ENCODE measurements at regions of chr2 and their contacts with region 1.

Region 1: DNA sequence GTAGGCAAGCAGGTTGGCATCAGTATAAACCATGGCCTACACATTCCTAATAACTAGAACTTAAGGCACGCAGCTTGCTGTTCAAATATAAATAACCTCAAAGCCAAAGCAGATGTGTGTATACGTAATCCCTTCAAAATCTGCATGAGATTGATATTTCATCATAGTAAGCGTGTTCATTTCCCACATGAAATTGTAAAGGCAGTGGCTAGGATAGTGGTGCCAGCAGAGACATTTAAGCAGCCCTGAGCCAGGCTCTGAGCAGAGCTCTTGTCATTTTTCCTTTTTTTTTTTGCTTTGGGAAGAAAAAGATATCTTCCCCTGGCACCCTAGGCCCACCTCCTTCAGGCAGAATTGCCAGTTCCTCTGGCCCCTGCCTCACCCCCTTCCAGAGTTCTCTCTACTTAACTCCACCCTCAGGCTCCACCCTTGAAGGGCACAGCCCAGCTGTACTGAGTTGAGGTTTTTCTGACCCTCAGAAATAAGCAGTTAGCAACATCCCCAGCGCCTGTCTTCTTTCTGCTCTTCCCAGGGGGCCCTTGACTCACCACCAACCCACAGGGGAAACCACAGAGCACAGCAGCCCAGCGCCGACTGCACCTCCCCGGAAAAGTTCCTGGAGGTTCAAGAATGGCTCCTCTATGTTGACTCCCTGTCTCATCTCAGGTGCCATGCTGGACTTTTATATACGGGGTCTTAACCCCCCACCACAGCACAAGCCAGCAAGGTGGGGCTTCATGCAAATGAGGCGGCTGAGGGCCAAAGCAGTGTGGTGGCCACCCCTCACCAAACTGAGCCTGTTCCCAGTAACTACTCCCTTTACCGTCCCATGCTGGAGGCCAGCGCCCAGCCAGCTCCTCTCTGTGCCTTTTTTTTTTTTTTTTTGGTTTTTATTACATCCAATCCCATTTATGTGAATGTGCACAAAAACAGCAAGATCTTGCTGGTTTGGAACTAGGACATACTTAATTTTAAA is 84.7 kb downstream of the EHD3 start:
- DNase-seq: peak; percentile 86
- ATAC-seq: peak; percentile 69
- H3K4me3 ChIP-seq: no peak overlapping the region
- H3K27ac ChIP-seq: peak overlapping the region; percentile 90
- H3K4me1 ChIP-seq: peaks cover 19% of the 10 kb centered on the region
- H3K27me3 ChIP-seq: no peaks in the 10 kb centered on the region
- CTCF ChIP-seq: no peak
- POLR2A ChIP-seq: no peak
- RAD21 ChIP-seq: no peak

Region 2: GRCh38 chr2:30346471-30347169 is 972.0 kb before region 1 on chr2:
- CTCF ChIA-PET with region 1: no interaction called
- POLR2A ChIA-PET with region 1: no interaction called
- dilution Hi-C with region 1: no loop called
- in situ Hi-C with region 1: no loop called
- intact Hi-C with region 1: no loop called
- DNase-seq: no peak
- ATAC-seq: peak; percentile 56; the same call in 1 of the 2 replicates
- H3K4me3 ChIP-seq: no peak overlapping the region
- H3K27ac ChIP-seq: no peak overlapping the region
- H3K4me1 ChIP-seq: no peaks in the 10 kb centered on the region; the same call in 1 of the 2 replicates
- H3K27me3 ChIP-seq: no peaks in the 10 kb centered on the region
- CTCF ChIP-seq: no peak
- POLR2A ChIP-seq: no peak
- RAD21 ChIP-seq: no peak

Region 3: DNA sequence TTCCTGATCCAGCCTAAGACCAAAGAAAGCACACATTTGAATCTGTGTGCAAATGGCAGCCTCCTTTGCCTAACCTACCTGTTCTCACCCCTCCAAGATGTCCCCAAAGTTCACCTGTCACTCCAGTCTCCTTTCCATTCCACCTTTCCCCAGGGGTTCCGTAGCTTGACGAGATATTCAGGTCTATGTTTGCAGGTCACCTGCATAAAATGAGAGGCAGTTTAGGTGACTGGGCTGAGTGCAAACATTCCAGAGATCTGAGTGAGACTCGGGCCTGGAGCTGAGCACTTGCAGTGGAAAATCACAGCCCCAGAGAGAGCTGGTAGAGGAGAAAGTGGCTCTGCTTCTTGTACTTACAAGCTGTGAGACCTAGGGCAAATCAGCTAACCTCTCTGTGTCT is 121.5 kb before region 1 on chr2:
- CTCF ChIA-PET with region 1: no interaction called
- POLR2A ChIA-PET with region 1: no interaction called
- dilution Hi-C with region 1: no loop called
- in situ Hi-C with region 1: no loop called
- intact Hi-C with region 1: no loop called
- DNase-seq: no peak
- ATAC-seq: no peak
- H3K4me3 ChIP-seq: no peak overlapping the region
- H3K27ac ChIP-seq: no peak overlapping the region
- H3K4me1 ChIP-seq: no peaks in the 10 kb centered on the region
- H3K27me3 ChIP-seq: peaks cover 13% of the 10 kb centered on the region
- CTCF ChIP-seq: no peak
- POLR2A ChIP-seq: no peak
- RAD21 ChIP-seq: no peak

Region 4: DNA sequence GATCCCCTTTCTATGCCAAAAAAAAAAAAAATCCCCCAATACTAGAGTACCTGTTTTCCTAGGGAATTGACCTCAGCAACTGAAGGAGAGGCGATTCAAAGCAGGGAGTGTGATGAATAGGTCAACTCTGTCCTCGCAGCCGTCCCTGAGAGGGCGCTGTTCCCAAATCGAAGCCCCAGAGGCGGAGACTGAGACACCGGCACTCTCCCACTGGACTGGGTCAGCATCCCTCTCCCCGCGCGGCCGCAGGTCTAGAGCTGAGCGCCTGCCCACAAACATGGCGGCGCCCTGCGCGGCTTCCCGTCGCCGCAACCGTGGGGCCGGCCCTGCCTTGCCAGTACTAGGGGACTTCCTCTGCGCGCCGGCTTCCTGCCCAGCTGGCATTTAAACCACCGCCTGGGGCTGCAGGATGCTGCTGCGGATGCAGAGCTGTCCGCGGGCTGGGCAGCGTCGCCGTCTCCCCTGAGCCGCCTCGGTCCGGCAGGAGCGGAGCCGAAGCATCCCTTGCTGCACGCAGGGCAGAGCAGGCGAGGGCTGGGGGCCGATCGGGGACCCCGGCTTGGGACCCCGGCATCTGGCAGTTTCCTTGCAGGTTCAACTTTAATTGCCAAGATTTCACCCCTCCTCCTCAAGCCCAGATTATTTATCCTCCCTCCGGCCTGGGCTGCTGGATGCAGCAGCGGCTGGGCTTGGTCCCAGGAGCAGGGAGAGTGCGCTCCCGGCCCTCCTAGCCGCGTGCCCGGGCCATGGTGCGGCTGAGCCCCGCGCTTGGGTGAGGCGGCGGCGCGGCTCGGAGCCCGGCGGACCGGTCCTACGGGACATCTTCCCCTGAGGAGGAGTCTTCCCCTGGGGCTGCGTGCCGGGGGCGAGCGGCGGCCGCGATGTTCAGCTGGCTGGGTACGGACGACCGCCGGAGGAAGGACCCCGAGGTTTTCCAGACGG is 84.6 kb before region 1 on chr2 and contains the start of gene EHD3:
- CTCF ChIA-PET with region 1: interaction called, 5 read pairs
- POLR2A ChIA-PET with region 1: interaction called, 3 read pairs
- dilution Hi-C with region 1: no loop called
- in situ Hi-C with region 1: no loop called
- intact Hi-C with region 1: loop called (anchors 1 kb)
- DNase-seq: peak; percentile 91
- ATAC-seq: peak; percentile 99
- H3K4me3 ChIP-seq: peak within 1 kb of the TSS; percentile 76
- H3K27ac ChIP-seq: peak within 1 kb of the TSS; percentile 56
- H3K4me1 ChIP-seq: peaks cover 8% of the 10 kb centered on the region; the same call in 1 of the 2 replicates
- H3K27me3 ChIP-seq: peaks cover 3% of the 10 kb centered on the region; the same call in 1 of the 2 replicates
- CTCF ChIP-seq: peak; percentile 72
- POLR2A ChIP-seq: peak; percentile 72
- RAD21 ChIP-seq: peak; percentile 66
- total RNA-seq, gene EHD3: 34.4 and 39.8 TPM in 2 replicates

Region 5: GRCh38 chr2:31274401-31275075 is 44.1 kb before region 1 on chr2:
- CTCF ChIA-PET with region 1: interaction called, 3 read pairs
- POLR2A ChIA-PET with region 1: interaction called, 7 read pairs
- dilution Hi-C with region 1: no loop called
- in situ Hi-C with region 1: no loop called
- intact Hi-C with region 1: loop called (anchors 1 kb)
- DNase-seq: peak; percentile 64
- ATAC-seq: peak; percentile 72
- H3K4me3 ChIP-seq: no peak overlapping the region
- H3K27ac ChIP-seq: peak overlapping the region; percentile 45; the same call in 1 of the 2 replicates
- H3K4me1 ChIP-seq: peaks cover 17% of the 10 kb centered on the region
- H3K27me3 ChIP-seq: 0 out of 2 replicates have a peak, but pooled peaks cover 4% of the 10 kb centered on the region
- CTCF ChIP-seq: 0 out of 2 replicates have a peak, but pooled peaks have one; percentile 2
- POLR2A ChIP-seq: no peak
- RAD21 ChIP-seq: no peak

Region 6: DNA sequence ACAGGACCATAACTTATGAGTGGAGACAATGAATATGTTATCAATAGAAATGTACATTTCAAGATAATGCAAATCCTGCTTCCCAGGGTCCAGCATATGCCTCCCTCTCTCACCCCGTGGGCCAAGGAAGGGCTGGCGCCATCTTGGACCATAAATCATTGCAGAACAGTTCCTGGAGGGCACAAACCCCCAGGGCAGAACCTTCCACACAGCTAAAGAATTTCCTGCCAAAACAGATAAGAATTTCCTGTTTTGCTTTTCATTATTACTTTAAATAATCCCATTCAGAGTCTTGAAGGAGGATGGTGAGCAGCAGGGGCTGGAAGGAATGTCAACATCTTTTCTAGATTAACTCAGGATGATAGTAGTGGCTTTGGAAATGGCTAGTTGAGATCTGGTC is 31.0 kb before region 1 on chr2:
- CTCF ChIA-PET with region 1: no interaction called
- POLR2A ChIA-PET with region 1: no interaction called
- dilution Hi-C with region 1: no loop called
- in situ Hi-C with region 1: no loop called
- intact Hi-C with region 1: loop called (anchors 2 kb)
- DNase-seq: peak; percentile 37
- ATAC-seq: peak; percentile 71
- H3K4me3 ChIP-seq: no peak overlapping the region
- H3K27ac ChIP-seq: no peak overlapping the region; the same call in 1 of the 2 replicates
- H3K4me1 ChIP-seq: peaks cover 10% of the 10 kb centered on the region
- H3K27me3 ChIP-seq: no peaks in the 10 kb centered on the region
- CTCF ChIP-seq: no peak
- POLR2A ChIP-seq: no peak
- RAD21 ChIP-seq: no peak

Measured in IMR-90 (cell line).